HepG2 (cell line): ENCODE measurements at regions of chr2 and their contacts with region 1.

Region 1: GRCh38 chr2:65640793-65641103 is 208.3 kb upstream of the SPRED2 start:
- DNase-seq: no peak
- ATAC-seq: no peak
- H3K4me3 ChIP-seq: no peak overlapping the region
- H3K27ac ChIP-seq: no peak overlapping the region
- H3K4me1 ChIP-seq: peaks cover 5% of the 10 kb centered on the region; the same call in 1 of the 2 replicates
- H3K27me3 ChIP-seq: peaks cover 0 to 10% of the 10 kb centered on the region in 2 experiments; a peak in 2 of 5 replicates
- CTCF ChIP-seq: no peak
- EP300 ChIP-seq: no peak
- POLR2A ChIP-seq: no peak
- RAD21 ChIP-seq: no peak

Region 2: GRCh38 chr2:65710779-65711295 is 70.1 kb after region 1 on chr2:
- CTCF ChIA-PET with region 1: no interaction called
- POLR2A ChIA-PET with region 1: no interaction called
- in situ Hi-C with region 1: no loop called
- intact Hi-C with region 1: loop called (anchors 1 kb)
- DNase-seq: peak; percentile 16
- ATAC-seq: peak; percentile 63
- H3K4me3 ChIP-seq: no peak overlapping the region
- H3K27ac ChIP-seq: no peak overlapping the region
- H3K4me1 ChIP-seq: no peaks in the 10 kb centered on the region
- H3K27me3 ChIP-seq: no peaks in the 10 kb centered on the region; a peak in 1 of 5 replicates
- CTCF ChIP-seq: peak; percentile 29
- EP300 ChIP-seq: no peak
- POLR2A ChIP-seq: no peak
- RAD21 ChIP-seq: no peak

Region 3: GRCh38 chr2:65800998-65801397 is 160.2 kb after region 1 on chr2:
- CTCF ChIA-PET with region 1: interaction called, 3 read pairs
- POLR2A ChIA-PET with region 1: no interaction called
- in situ Hi-C with region 1: no loop called
- intact Hi-C with region 1: loop called (anchors 1 kb)
- DNase-seq: no peak
- ATAC-seq: peak; percentile 34; the same call in 1 of the 3 replicates
- H3K4me3 ChIP-seq: no peak overlapping the region
- H3K27ac ChIP-seq: no peak overlapping the region
- H3K4me1 ChIP-seq: no peaks in the 10 kb centered on the region
- H3K27me3 ChIP-seq: no peaks in the 10 kb centered on the region; a peak in 2 of 5 replicates
- CTCF ChIP-seq: peak; percentile 30
- EP300 ChIP-seq: no peak
- POLR2A ChIP-seq: no peak
- RAD21 ChIP-seq: no peak

Region 4: GRCh38 chr2:65974067-65974723 is 333.4 kb after region 1 on chr2:
- CTCF ChIA-PET with region 1: no interaction called
- POLR2A ChIA-PET with region 1: no interaction called
- in situ Hi-C with region 1: no loop called
- intact Hi-C with region 1: loop called (anchors 5 kb)
- DNase-seq: no peak
- ATAC-seq: peak; percentile 50; the same call in 2 of the 3 replicates
- H3K4me3 ChIP-seq: no peak overlapping the region
- H3K27ac ChIP-seq: no peak overlapping the region
- H3K4me1 ChIP-seq: peaks cover 6% of the 10 kb centered on the region
- H3K27me3 ChIP-seq: no peaks in the 10 kb centered on the region
- CTCF ChIP-seq: no peak
- EP300 ChIP-seq: no peak
- POLR2A ChIP-seq: no peak
- RAD21 ChIP-seq: no peak

Region 5: GRCh38 chr2:66574701-66575624 is 934.2 kb after region 1 on chr2:
- CTCF ChIA-PET with region 1: no interaction called
- POLR2A ChIA-PET with region 1: no interaction called
- in situ Hi-C with region 1: loop called (anchors 25 kb)
- intact Hi-C with region 1: loop called (anchors 2 kb)
- DNase-seq: peak; percentile 57
- ATAC-seq: peak; percentile 61
- H3K4me3 ChIP-seq: peak overlapping the region; percentile 53 to 70 (median 62)
- H3K27ac ChIP-seq: no peak overlapping the region
- H3K4me1 ChIP-seq: peaks cover 36% of the 10 kb centered on the region
- H3K27me3 ChIP-seq: peaks cover 20 to 45% of the 10 kb centered on the region in 2 experiments
- CTCF ChIP-seq: peak; percentile 86
- EP300 ChIP-seq: no peak
- POLR2A ChIP-seq: no peak
- RAD21 ChIP-seq: peak; percentile 59

Region 6: DNA sequence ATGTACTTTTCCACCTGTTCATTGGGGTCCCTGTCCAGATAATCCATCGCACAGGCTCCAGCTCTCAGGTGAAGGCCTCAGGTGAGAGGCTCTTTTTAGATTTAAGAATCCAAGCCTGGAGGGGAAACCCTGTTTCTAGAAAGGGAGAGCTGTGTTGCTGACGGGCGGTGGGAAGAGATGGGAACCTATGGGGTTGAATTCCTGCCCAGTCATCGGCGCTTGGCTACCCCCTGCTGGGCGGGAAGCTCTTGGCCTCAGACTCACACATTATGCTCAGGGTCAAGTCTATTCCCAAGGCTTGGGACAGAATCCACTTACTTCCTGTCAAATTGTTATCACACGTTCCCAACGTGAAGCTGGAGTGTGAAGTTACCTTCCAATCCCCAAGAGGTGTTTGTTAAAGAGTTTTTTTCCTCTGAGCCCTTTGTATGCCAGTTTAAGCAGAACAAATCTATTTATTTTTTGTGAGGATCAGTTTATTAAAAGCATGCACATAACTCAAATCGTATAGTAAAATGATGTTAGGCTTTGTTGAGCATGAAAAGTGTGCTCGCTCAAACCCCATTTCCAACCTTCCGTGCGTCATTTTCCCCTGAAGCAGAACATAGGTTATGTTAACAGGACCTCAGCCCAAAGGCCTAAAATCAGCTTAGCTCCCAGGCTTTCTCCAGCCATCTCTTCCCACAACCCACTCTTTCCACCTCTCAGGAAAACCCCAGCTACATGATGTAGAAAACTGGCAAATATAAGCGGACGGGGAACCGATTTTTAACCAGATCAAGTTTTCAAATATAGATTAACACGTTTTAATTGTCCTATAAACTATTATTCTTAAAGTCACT is 1574.7 kb after region 1 on chr2:
- CTCF ChIA-PET with region 1: no interaction called
- POLR2A ChIA-PET with region 1: no interaction called
- in situ Hi-C with region 1: no loop called
- intact Hi-C with region 1: loop called (anchors 2 kb)
- DNase-seq: peak; percentile 35
- ATAC-seq: peak; percentile 99
- H3K4me3 ChIP-seq: no peak overlapping the region
- H3K27ac ChIP-seq: no peak overlapping the region
- H3K4me1 ChIP-seq: no peaks in the 10 kb centered on the region
- H3K27me3 ChIP-seq: no peaks in the 10 kb centered on the region
- CTCF ChIP-seq: peak; percentile 85
- EP300 ChIP-seq: no peak
- POLR2A ChIP-seq: no peak
- RAD21 ChIP-seq: peak; percentile 89